MCF 10A (cell line): ENCODE measurements at regions of chr1 and their contacts with region 1.

Region 1: DNA sequence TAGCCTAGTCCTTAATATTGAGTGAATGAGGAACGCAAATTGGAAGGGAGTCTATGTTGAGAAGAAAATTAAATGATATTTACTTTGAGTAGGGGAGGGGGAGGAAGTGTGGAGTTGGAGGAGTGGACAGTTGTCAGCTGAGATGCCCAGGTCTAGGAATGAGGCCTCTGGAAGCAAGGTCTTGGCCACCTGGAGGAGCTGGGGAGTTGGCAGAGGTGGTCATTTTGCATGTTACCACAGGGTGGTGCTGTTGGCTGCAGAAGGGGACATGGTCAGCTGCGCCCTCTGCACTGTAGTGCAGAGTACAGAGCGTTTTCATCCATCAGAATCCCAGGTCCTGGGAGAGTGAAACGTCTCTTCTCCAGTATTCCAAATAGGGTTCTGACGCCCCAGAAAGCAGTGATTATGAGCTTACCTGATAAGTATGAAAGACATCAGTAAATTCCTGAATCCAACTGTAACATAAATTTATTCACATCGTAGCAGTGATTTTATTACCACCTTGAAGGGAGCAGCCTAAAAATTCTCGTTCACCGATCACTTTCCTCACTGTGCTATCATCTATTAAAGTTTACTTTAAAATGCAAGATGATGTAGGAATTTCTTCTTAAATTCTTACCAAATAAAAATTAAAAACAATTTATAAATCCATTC is 13.8 kb downstream of the PARK7 start:
- DNase-seq: peak; percentile 87
- H3K4me3 Mint-ChIP-seq: no peak overlapping the region
- H3K27ac Mint-ChIP-seq: no peak overlapping the region
- H3K4me1 Mint-ChIP-seq: no peaks in the 10 kb centered on the region
- H3K27me3 Mint-ChIP-seq: no peaks in the 10 kb centered on the region
- CTCF ChIP-seq: peak; percentile 95

Region 2: GRCh38 chr1:7656557-7657215 is 318.7 kb before region 1 on chr1:
- CTCF ChIA-PET with region 1: no interaction called
- POLR2A ChIA-PET with region 1: no interaction called
- intact Hi-C with region 1: no loop called
- DNase-seq: no peak
- H3K4me3 Mint-ChIP-seq: no peak overlapping the region
- H3K27ac Mint-ChIP-seq: no peak overlapping the region
- H3K4me1 Mint-ChIP-seq: no peaks in the 10 kb centered on the region
- H3K27me3 Mint-ChIP-seq: no peaks in the 10 kb centered on the region
- CTCF ChIP-seq: no peak

Region 3: DNA sequence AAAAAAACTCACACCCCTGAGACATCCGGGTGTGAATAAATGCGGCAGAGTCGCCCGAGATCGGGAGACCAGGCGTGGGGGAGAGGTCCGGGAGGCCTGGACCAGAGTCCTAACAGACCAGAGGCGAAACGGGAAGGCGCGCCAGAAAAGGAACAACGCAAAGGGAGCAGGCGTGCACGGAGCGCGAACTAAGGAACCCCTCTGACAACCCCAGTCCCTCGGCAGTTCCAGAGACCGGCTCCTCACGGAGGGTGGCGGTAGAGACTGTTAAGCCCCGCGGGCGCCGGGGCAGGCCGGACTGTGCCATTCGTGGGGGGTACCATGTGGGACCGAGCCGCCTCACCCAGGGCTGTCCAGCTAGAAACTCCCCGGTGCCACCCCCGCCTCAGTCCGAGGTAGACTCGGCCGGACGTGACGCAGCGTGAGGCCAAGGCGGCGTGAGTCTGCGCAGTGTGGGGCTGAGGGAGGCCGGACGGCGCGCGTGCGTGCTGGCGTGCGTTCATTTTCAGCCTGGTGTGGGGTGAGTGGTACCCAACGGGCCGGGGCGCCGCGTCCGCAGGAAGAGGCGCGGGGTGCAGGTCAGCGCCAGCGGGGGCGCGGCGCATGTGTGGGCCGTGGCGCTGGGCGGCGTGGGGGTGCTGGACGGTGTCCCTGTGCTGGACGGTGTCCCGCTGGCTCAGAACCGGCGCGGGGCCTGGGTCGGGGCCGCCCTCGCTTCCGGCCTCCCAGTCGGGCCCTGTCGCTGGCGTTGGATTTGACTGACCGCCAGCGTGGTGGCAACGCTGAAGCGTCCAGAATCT is 13.9 kb before region 1 on chr1 and contains the start of gene PARK7:
- CTCF ChIA-PET with region 1: interaction called, 20 read pairs
- POLR2A ChIA-PET with region 1: interaction called, 18 read pairs
- intact Hi-C with region 1: no loop called
- DNase-seq: peak; percentile 99
- H3K4me3 Mint-ChIP-seq: peak within 1 kb of the TSS; percentile 84
- H3K27ac Mint-ChIP-seq: peak within 1 kb of the TSS; percentile 30
- H3K4me1 Mint-ChIP-seq: peaks cover 11% of the 10 kb centered on the region
- H3K27me3 Mint-ChIP-seq: no peaks in the 10 kb centered on the region
- CTCF ChIP-seq: peak; percentile 19
- total RNA-seq, gene PARK7: 419 and 450 TPM in 2 replicates

Region 4: DNA sequence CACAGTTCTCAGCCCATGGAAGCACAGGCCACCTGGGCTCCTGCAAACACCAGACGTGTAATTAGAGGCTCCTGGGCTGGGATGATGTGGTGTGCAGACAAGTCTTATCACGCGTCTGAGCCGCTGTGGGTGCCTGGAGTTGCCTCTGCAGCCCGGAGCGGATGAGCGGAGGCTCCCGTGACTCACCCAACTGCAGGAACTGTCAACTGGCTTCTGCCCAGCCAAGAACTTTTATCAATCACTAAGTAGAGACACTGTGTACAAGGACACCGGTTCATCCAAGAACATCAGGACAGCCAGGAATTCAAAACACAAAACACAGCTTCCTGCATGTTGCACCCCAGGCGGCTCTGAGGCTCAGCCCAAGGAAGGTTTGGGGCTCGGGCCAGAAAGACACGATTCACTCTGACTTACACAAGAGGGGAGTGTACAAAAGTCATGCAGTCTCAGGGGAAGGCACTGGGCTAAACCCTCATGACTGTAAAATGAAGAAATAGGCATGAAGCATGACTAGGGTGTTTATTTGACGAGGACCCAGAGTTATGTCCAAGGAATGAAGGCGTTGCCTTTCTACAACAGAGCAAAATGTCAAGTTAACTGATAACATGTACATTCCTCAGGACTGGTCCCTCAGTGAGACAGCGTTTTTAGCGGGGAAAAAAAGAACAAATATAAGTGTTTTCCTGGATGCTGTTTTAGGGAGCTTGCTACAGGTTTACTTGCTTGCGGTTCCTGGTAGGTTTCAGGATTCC is 29.6 kb after region 1 on chr1:
- CTCF ChIA-PET with region 1: interaction called, 12 read pairs
- POLR2A ChIA-PET with region 1: interaction called, 35 read pairs
- intact Hi-C with region 1: no loop called
- DNase-seq: peak; percentile 99
- H3K4me3 Mint-ChIP-seq: peak overlapping the region; percentile 57
- H3K27ac Mint-ChIP-seq: peak overlapping the region; percentile 84
- H3K4me1 Mint-ChIP-seq: peaks cover 38% of the 10 kb centered on the region
- H3K27me3 Mint-ChIP-seq: no peaks in the 10 kb centered on the region
- CTCF ChIP-seq: no peak

Region 5: DNA sequence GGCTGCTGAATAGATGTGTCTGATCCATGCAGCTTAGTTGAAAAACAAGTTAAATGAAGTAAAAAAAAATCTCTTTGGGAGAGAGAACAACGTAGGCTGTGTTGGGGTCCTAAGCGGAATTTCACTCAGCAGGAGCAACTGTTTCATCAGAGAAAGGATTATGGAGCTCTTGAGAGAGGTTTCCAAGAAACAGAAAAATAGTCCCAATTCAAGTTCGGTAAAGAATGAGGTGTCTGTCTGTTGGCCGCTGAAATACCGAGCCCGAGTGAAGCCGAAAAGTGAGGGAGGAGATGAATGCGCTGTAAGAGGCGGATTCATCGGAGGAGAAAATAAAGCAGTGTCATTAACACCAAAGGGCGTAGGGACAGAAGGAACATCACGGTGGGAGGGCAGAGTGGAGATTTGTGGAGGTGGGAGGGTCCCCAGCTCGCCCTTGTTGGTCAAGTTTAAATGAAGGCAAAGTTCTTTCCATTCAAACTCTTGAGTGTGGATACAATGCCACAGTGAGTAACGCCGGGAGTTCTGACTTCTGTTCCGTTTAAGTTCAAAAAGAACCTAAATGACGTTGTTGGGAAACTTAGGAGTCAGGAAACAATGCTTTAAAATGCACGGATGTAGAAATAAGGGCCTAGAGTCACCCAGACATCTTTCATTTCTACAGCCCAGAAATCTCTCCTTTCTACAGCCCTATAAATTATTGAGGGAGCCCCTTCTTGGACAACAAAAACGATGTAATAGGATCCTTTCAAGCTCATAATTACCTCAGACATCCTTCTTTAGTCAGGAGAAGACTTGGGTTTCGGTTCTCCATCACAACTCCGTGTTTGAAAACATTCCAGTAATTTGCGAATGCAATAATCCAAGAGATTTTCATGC is 327.0 kb after region 1 on chr1:
- CTCF ChIA-PET with region 1: interaction called, 11 read pairs
- POLR2A ChIA-PET with region 1: no interaction called
- intact Hi-C with region 1: no loop called
- DNase-seq: no peak
- H3K4me3 Mint-ChIP-seq: no peak overlapping the region
- H3K27ac Mint-ChIP-seq: no peak overlapping the region
- H3K4me1 Mint-ChIP-seq: no peaks in the 10 kb centered on the region
- H3K27me3 Mint-ChIP-seq: no peaks in the 10 kb centered on the region
- CTCF ChIP-seq: no peak

Region 6: GRCh38 chr1:8348777-8349491 is 373.6 kb after region 1 on chr1:
- CTCF ChIA-PET with region 1: interaction called, 23 read pairs
- POLR2A ChIA-PET with region 1: interaction called, 4 read pairs
- intact Hi-C with region 1: loop called (anchors 1 kb)
- DNase-seq: peak; percentile 67
- H3K4me3 Mint-ChIP-seq: no peak overlapping the region
- H3K27ac Mint-ChIP-seq: peak overlapping the region; percentile 5
- H3K4me1 Mint-ChIP-seq: peaks cover 20% of the 10 kb centered on the region
- H3K27me3 Mint-ChIP-seq: peaks cover 14% of the 10 kb centered on the region
- CTCF ChIP-seq: peak; percentile 89